ENCODE measurements at regions of chr4 and their contacts with region 1.

Region 1: DNA sequence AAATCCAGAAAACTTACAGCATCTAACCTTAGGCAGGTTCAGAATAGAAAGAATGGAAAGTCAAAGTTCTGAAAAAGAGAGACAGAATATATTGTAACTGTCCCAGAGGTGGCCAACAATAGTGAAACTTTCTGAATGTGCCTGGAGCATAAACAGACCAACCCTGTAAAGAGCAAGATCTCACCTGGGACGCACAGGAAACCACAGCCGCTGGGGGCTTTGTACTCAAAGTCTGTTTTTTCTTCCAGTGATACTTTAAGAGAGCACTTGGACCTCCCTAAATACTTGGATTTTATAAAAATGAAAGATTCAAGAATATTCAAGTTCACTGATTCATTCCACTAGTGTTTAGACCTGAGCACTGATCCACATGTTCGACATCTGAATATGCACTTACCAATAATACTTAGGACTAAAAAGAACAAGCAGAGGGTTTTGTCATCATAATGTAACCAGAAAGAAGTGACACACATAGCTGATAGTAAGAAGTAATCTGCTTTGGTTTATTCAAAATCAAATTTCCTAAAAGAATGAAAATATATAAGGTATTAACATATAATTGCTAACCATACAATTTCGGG is 35.3 kb downstream of the ARAP2 start:
- DNase-seq: peak; percentile 72
- H3K4me3 Mint-ChIP-seq: peak overlapping the region; percentile 57
- H3K27ac Mint-ChIP-seq: peak overlapping the region; percentile 78
- H3K4me1 Mint-ChIP-seq: peaks cover 39% of the 10 kb centered on the region
- H3K27me3 Mint-ChIP-seq: no peaks in the 10 kb centered on the region

Region 2: DNA sequence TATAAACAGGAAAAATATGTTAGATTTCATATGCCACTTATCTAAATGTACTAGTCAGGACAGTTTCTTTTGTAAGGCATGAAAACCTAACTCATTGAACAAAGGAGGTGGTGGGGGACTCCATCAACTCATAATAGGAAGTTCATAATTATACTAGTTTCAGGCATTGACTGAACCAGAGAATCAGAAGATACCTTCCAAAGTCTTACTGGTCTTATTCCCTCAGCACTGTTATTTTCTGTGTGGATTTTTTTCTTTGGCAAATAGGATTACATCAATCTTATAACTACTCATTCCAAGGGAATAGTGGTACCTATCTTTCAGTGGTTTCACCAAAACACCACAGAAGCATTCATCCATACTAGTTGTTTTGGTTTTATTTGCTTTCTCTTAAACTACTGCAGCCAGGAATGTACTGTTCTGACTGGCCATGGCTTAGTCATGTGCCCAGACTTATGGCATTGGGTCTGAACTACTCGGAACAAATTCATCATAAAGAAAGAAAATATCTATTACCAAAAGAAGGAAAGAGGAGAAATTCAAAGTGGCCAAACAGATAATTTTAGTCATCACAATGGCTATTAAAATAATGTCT is 238.5 kb before region 1 on chr4:
- intact Hi-C with region 1: loop called (anchors 10 kb)
- DNase-seq: no peak
- H3K4me3 Mint-ChIP-seq: no peak overlapping the region
- H3K27ac Mint-ChIP-seq: no peak overlapping the region
- H3K4me1 Mint-ChIP-seq: peaks cover 10% of the 10 kb centered on the region
- H3K27me3 Mint-ChIP-seq: no peaks in the 10 kb centered on the region

Region 3: DNA sequence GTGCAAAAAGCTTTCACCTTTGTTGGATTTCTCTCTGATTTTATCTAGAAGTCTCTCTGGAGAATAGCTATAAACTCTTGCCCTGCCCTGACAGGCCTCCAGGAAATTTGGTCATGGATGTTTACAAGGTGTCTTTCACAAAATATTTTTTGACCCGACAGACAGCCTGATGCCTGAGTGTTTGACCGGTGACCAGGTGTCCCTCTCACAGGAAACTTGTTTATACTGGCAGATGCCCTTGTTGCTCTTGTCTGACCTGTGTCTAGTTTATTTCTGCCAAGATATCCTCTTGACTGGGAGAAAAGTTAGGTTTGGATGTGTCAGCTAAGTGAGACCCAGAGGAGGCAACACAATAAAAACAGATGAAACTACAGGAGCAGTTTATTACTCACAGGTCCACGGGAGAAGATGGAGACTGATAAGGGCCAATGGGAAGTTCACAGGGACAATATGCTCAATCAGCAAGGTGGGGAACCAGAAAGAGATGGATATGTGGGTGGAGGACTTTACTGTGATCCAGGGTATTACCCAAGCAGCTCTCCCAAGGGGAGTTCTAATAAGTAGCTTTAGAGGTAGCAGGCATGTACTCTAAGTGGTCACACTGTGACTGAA is 207.9 kb before region 1 on chr4:
- intact Hi-C with region 1: no loop called
- DNase-seq: no peak
- H3K4me3 Mint-ChIP-seq: no peak overlapping the region
- H3K27ac Mint-ChIP-seq: no peak overlapping the region
- H3K4me1 Mint-ChIP-seq: no peaks in the 10 kb centered on the region
- H3K27me3 Mint-ChIP-seq: no peaks in the 10 kb centered on the region

Region 4: DNA sequence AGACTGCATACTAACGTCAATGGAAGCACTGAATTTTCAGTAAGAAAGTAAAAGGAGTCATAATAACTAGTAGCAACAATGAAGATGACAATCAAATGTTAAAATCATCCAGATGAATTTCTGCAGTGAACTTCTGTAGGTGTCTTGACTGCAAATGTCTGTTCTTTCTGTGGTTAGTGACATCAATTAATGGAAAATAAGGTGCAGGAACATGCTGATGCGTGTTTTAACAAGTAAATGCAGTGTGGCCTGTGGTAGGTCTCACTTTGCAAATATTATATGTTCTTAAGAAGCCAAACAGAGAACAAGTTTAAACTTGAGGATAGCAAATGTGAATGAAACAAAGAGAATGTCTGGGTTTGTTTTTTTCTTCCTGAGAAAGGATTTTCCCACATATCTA is 69.8 kb after region 1 on chr4:
- intact Hi-C with region 1: loop called (anchors 2 kb)
- DNase-seq: no peak
- H3K4me3 Mint-ChIP-seq: peak overlapping the region; percentile 67
- H3K27ac Mint-ChIP-seq: peak overlapping the region; percentile 80
- H3K4me1 Mint-ChIP-seq: peaks cover 68% of the 10 kb centered on the region
- H3K27me3 Mint-ChIP-seq: no peaks in the 10 kb centered on the region

Region 5: DNA sequence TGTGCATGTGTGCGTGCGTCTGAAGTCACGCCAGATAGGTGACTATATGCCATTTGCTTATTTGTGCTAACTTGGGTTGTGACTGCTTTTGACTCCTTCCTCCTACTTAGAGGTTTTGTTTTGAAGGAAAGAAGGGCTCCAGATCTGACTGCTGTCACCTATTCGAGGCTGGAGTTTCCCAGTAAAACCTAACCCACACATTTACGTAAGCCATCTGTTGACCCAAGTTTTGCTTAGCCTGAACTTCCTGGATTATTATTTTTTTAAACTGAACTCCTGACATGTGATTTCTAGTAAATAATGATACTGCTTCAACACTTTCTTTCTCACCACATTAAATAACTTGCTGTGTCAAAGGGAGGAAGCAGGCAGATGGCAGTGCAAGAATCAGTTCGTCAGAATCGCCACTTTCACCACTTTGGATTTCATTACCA is 114.0 kb after region 1 on chr4:
- intact Hi-C with region 1: loop called (anchors 1 kb)
- DNase-seq: peak; percentile 90
- H3K4me3 Mint-ChIP-seq: peak overlapping the region; percentile 21
- H3K27ac Mint-ChIP-seq: peak overlapping the region; percentile 93
- H3K4me1 Mint-ChIP-seq: peaks cover 71% of the 10 kb centered on the region
- H3K27me3 Mint-ChIP-seq: no peaks in the 10 kb centered on the region